Panc1 (cell line): ENCODE measurements at regions of chr5 and their contacts with region 1.

Region 1: DNA sequence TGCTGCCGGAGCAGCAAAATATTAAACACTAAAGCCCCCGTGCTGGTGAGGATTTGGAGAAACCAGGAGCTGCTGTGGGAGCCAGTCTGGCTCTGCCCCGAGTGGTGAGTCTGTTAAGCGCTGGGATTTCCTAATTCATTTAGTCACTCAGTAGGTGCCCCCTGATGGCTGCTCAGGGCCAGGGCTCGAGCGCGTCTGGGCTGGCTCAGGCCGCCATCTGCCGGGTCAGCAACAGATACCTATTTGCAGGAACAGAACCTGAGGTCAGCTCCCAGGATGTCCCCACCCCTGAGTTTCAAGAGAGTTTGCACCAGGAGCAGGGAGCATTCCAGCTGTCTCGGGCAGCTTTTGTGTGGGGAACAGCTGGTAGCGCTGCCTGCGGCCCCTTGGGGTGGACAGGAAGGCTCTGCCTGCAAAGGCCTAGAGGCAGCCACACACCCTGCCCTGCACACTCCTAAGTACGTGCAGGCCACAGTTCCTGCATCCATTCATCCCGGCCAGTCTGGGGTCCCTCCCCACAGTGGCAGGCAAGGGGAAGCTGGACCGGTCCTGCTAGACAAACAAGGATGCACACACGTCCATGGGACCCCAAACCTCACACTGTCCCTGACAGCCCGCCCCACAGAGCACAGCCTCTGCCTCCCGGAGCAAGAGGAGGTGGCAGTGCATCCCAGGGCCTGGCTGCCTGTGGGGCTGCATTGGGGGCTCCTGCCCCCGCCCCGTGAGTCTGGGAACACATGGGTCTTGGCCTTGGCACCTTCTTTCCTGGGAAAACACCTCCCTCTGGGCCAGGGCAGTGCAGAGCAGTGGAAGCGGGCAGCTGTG is 83.7 kb downstream of the ADAMTS2 start:
- DNase-seq: no peak
- ATAC-seq: peak; percentile 88
- H3K4me3 ChIP-seq: no peak overlapping the region
- H3K27ac ChIP-seq: no peak overlapping the region
- H3K4me1 ChIP-seq: no peaks in the 10 kb centered on the region
- H3K27me3 ChIP-seq: no peaks in the 10 kb centered on the region
- CTCF ChIP-seq: peak; percentile 83

Region 2: GRCh38 chr5:179166886-179167841 is 94.3 kb before region 1 on chr5:
- CTCF ChIA-PET with region 1: interaction called, 4 read pairs
- POLR2A ChIA-PET with region 1: no interaction called
- in situ Hi-C with region 1: no loop called
- intact Hi-C with region 1: loop called (anchors 5 kb)
- DNase-seq: no peak
- ATAC-seq: peak; percentile 87
- H3K4me3 ChIP-seq: no peak overlapping the region; a peak in 1 of 4 replicates
- H3K27ac ChIP-seq: no peak overlapping the region
- H3K4me1 ChIP-seq: no peaks in the 10 kb centered on the region
- H3K27me3 ChIP-seq: no peaks in the 10 kb centered on the region
- CTCF ChIP-seq: peak; percentile 98

Region 3: GRCh38 chr5:179494774-179495526 is 233.4 kb after region 1 on chr5:
- CTCF ChIA-PET with region 1: no interaction called
- POLR2A ChIA-PET with region 1: no interaction called
- in situ Hi-C with region 1: no loop called
- intact Hi-C with region 1: loop called (anchors 5 kb)
- DNase-seq: no peak
- ATAC-seq: no peak
- H3K4me3 ChIP-seq: no peak overlapping the region
- H3K27ac ChIP-seq: no peak overlapping the region
- H3K4me1 ChIP-seq: no peaks in the 10 kb centered on the region
- H3K27me3 ChIP-seq: no peaks in the 10 kb centered on the region
- CTCF ChIP-seq: no peak

Region 4: GRCh38 chr5:179793468-179794139 is 532.1 kb after region 1 on chr5 and contains the start of gene LTC4S:
- CTCF ChIA-PET with region 1: no interaction called
- POLR2A ChIA-PET with region 1: no interaction called
- in situ Hi-C with region 1: no loop called
- intact Hi-C with region 1: no loop called
- DNase-seq: no peak
- ATAC-seq: no peak
- H3K4me3 ChIP-seq: no peak within 1 kb of the TSS; a peak in 1 of 4 replicates
- H3K27ac ChIP-seq: no peak within 1 kb of the TSS
- H3K4me1 ChIP-seq: peaks cover 9% of the 10 kb centered on the region
- H3K27me3 ChIP-seq: no peaks in the 10 kb centered on the region
- CTCF ChIP-seq: no peak
- total RNA-seq, gene LTC4S: 0.69 TPM